Activated CD4-positive, alpha-beta memory T cell treated with anti-CD3 and anti-CD28 coated beads, Interleukin-2, amount 10 ng/mL, durations not matched to agents 7 days and 5 days (primary cell): ENCODE measurements at regions of chr6 and their contacts with region 1.

Region 1: DNA sequence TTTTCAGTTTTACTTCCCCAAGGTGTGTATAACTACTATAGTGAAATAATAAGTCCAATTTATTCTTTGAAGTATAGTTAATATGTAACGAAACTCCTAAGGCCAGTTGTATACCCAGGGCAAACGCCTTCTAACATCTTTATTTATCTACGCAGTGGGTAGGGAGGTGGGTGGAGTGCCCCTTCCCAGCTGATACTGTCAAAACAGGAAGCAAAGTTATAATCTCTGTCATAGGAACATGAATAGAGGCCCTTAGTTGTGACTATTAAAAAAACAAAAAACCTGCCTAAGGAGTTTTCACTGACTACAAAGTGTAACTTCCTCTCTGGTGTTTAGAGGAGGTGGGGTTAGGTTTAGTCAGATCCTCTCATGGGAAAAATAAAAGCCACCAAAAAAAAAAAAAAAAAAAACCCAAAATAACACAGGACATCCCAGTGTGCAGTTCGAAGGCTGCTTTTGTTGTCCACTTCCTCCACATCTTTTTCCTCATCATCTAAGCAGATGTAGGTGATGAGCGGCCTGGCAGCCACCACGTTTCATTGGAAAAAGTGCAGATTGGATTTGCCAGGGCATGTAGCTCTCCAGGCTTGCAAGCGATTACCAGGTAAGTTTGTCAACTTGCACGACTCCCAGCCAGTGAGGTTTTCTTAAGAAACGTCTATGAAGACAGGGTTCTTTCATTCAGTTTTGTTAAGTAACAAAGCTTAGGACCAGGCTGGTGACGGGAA is 58.7 kb downstream of the UTRN start:
- DNase-seq: peak; percentile 54
- H3K4me3 Mint-ChIP-seq: peak overlapping the region; percentile 99
- H3K27ac Mint-ChIP-seq: peak overlapping the region; percentile 99
- H3K4me1 Mint-ChIP-seq: peaks cover 73% of the 10 kb centered on the region
- H3K27me3 Mint-ChIP-seq: no peaks in the 10 kb centered on the region

Region 2: GRCh38 chr6:144294016-144294415 is 49.8 kb before region 1 on chr6:
- CTCF ChIA-PET with region 1: no interaction called
- POLR2A ChIA-PET with region 1: no interaction called
- DNase-seq: no peak
- H3K4me3 Mint-ChIP-seq: no peak overlapping the region
- H3K27ac Mint-ChIP-seq: no peak overlapping the region
- H3K4me1 Mint-ChIP-seq: peaks cover 10% of the 10 kb centered on the region
- H3K27me3 Mint-ChIP-seq: peaks cover 2% of the 10 kb centered on the region

Region 3: DNA sequence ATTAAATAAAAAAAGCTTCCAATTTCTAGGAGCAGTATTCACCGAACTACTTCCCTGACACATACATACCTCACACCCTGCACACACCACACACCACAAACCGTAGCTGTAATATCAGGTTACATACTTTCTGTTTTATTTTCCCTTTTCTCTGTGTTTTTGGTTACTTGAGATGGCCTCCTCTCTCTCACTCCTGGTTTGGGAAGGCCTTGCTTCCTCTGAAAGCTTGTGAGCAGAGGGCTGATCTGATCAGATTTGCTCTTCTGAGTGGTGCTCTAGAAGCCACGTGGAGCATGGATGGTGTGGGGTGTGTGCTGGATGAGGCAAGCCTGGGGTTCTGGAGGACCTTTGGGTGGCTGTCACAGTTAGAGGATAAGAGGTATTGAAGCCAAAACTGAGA is 37.9 kb before region 1 on chr6:
- CTCF ChIA-PET with region 1: no interaction called
- POLR2A ChIA-PET with region 1: interaction called, 12 read pairs
- DNase-seq: peak; percentile 54
- H3K4me3 Mint-ChIP-seq: peak overlapping the region; percentile 46
- H3K27ac Mint-ChIP-seq: peak overlapping the region; percentile 83
- H3K4me1 Mint-ChIP-seq: peaks cover 37% of the 10 kb centered on the region
- H3K27me3 Mint-ChIP-seq: peaks cover 17% of the 10 kb centered on the region

Region 4: GRCh38 chr6:144353871-144354314 is 10.0 kb after region 1 on chr6:
- CTCF ChIA-PET with region 1: interaction called, 4 read pairs
- POLR2A ChIA-PET with region 1: interaction called, 35 read pairs
- DNase-seq: peak; percentile 61
- H3K4me3 Mint-ChIP-seq: peak overlapping the region; percentile 60
- H3K27ac Mint-ChIP-seq: peak overlapping the region; percentile 90
- H3K4me1 Mint-ChIP-seq: peaks cover 60% of the 10 kb centered on the region
- H3K27me3 Mint-ChIP-seq: no peaks in the 10 kb centered on the region

Region 5: GRCh38 chr6:144418959-144419545 is 75.2 kb after region 1 on chr6:
- CTCF ChIA-PET with region 1: no interaction called
- POLR2A ChIA-PET with region 1: no interaction called
- DNase-seq: no peak
- H3K4me3 Mint-ChIP-seq: no peak overlapping the region
- H3K27ac Mint-ChIP-seq: no peak overlapping the region
- H3K4me1 Mint-ChIP-seq: peaks cover 9% of the 10 kb centered on the region
- H3K27me3 Mint-ChIP-seq: no peaks in the 10 kb centered on the region